Mucosa of descending colon (tissue), 3 donors: ENCODE measurements at regions of chrX and their contacts with region 1.

Region 1: GRCh38 chrX:47854474-47854873 is 17.8 kb downstream of the ZNF81 start:
- DNase-seq: peak in 2 of 3 donors; percentile 41 to 66
- ATAC-seq: peak; percentile 78
- H3K4me3 ChIP-seq: no peak overlapping the region
- H3K4me1 ChIP-seq: no peaks in the 10 kb centered on the region
- CTCF ChIP-seq: no peak

Region 2: DNA sequence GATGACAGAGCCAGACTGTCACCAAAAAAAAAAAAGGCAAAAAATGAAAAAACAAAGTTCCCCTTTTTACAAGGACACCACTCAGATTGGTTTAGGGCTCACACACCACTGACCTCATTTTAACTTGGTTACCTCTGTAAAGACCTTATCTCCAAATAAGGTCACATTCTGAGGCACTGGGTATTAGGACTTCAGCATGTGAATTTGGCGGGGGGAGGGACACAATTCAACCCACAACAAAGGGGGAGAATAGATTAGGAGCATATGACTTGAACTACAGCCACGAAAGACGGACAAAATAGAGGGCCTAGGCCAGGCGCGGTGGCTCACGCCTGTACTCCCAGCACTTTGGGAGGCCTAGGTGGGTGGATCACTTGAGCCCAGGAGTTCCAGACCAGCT is 324.4 kb before region 1 on chrX:
- intact Hi-C with region 1: no loop called
- DNase-seq: no peak
- ATAC-seq: no peak
- H3K4me3 ChIP-seq: no peak overlapping the region
- H3K4me1 ChIP-seq: no peaks in the 10 kb centered on the region
- CTCF ChIP-seq: no peak

Region 3: GRCh38 chrX:47697191-47697590 is 157.3 kb before region 1 on chrX:
- intact Hi-C with region 1: no loop called
- DNase-seq: peak in 1 of 3 donors; percentile 5
- ATAC-seq: peak; percentile 78
- H3K4me3 ChIP-seq: no peak overlapping the region
- H3K4me1 ChIP-seq: no peaks in the 10 kb centered on the region
- CTCF ChIP-seq: no peak

Region 4: DNA sequence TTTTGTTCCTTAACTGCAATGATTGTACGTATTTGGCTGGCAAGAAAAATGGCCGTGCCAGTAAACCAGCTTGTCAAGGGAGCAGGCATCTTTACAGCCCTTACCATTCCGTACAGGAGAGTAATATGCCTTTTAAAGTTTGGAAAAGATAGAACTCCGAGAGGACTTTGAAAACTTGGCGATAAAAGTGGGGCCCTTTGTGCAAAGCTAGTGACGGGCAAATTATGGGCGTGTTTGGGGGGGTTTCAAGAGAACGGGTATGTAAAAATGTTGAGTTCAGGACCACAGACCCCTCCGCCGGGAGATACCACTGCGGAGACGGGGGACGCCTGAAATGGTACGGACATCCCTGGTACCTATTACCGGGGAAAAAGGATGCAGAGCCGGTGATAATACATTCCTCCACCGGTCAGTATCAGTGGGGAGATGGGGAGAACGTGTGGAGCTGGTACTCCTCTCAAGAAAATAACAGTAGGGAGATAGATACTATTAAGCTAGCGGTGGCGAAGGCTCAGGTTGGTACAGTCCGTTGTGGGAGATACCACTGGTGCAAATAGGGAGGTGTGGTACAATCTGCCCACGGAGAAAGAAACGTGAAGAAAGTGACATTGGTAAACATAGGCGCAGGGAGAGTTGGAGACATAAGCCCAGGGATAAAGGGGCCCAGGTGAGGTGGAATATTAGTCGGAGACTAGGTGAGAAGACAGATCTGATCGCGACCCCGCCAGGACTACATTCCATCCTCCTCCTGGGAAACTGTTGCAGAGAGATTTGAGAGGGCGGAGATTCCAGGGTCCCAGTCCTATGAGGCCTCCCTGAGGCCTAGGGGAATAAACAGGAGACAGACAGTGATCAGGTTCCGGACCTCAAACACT is 166.8 kb after region 1 on chrX:
- intact Hi-C with region 1: loop called in 1 of 2 experiments (anchors 10 kb)
- DNase-seq: peak; percentile 72 to 85 (median 82)
- ATAC-seq: peak; percentile 88
- H3K4me3 ChIP-seq: peak overlapping the region; percentile 11
- H3K4me1 ChIP-seq: no peaks in the 10 kb centered on the region
- CTCF ChIP-seq: no peak